Common myeloid progenitor, CD34-positive (primary cell): ENCODE measurements at regions of chr11 and their contacts with region 1.

Region 1: GRCh38 chr11:17063171-17064002 is 14.1 kb downstream of the RPS13 start:
- DNase-seq: peak; percentile 43 to 58 (median 50)
- H3K4me3 ChIP-seq: no peak overlapping the region
- H3K27ac ChIP-seq: no peak overlapping the region
- H3K4me1 ChIP-seq: no peaks in the 10 kb centered on the region
- H3K27me3 ChIP-seq: no peaks in the 10 kb centered on the region

Region 2: GRCh38 chr11:16935518-16936302 is 127.7 kb before region 1 on chr11:
- CTCF ChIA-PET with region 1: interaction called, 22 read pairs
- POLR2A ChIA-PET with region 1: no interaction called
- DNase-seq: peak; percentile 40 to 70 (median 64)
- H3K4me3 ChIP-seq: no peak overlapping the region
- H3K27ac ChIP-seq: no peak overlapping the region
- H3K4me1 ChIP-seq: no peaks in the 10 kb centered on the region
- H3K27me3 ChIP-seq: peaks cover 0 to 11% (median 0%) of the 10 kb centered on the region in 5 experiments

Region 3: GRCh38 chr11:16945671-16946469 is 117.5 kb before region 1 on chr11:
- CTCF ChIA-PET with region 1: interaction called, 22 read pairs
- POLR2A ChIA-PET with region 1: no interaction called
- DNase-seq: peak; percentile 54 to 68 (median 63)
- H3K4me3 ChIP-seq: no peak overlapping the region
- H3K27ac ChIP-seq: no peak overlapping the region
- H3K4me1 ChIP-seq: peaks cover 0 to 1% (median 0%) of the 10 kb centered on the region in 4 experiments
- H3K27me3 ChIP-seq: no peaks in the 10 kb centered on the region

Region 4: GRCh38 chr11:17019232-17019631 is 44.2 kb before region 1 on chr11:
- CTCF ChIA-PET with region 1: no interaction called
- POLR2A ChIA-PET with region 1: no interaction called
- DNase-seq: no peak
- H3K4me3 ChIP-seq: no peak overlapping the region
- H3K27ac ChIP-seq: no peak overlapping the region
- H3K4me1 ChIP-seq: peaks cover 0 to 4% (median 2%) of the 10 kb centered on the region in 4 experiments
- H3K27me3 ChIP-seq: peaks cover 0 to 10% (median 2%) of the 10 kb centered on the region in 5 experiments

Region 5: DNA sequence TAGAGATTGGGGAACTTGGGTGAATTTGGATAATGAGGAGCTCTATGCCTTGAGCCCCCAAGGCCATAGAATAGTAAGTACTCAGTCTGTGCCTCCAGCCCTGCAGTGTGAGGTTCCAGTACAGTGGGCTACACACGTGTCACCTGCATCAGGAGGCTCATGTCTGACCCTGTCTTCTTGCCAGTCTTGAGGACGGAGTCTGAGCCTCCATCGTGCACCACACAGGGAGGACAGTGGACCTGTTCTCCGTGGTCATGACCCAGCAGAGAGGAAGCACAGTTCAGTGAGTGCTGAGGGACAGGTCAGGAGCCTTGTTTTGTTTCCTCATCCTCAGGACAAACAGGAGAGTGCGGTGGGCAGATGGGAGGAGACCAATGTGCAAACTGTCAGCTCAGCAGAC is 16.7 kb before region 1 on chr11:
- CTCF ChIA-PET with region 1: interaction called, 11 read pairs
- POLR2A ChIA-PET with region 1: no interaction called
- DNase-seq: no peak
- H3K4me3 ChIP-seq: no peak overlapping the region
- H3K27ac ChIP-seq: no peak overlapping the region
- H3K4me1 ChIP-seq: no peaks in the 10 kb centered on the region
- H3K27me3 ChIP-seq: no peaks in the 10 kb centered on the region

Region 6: DNA sequence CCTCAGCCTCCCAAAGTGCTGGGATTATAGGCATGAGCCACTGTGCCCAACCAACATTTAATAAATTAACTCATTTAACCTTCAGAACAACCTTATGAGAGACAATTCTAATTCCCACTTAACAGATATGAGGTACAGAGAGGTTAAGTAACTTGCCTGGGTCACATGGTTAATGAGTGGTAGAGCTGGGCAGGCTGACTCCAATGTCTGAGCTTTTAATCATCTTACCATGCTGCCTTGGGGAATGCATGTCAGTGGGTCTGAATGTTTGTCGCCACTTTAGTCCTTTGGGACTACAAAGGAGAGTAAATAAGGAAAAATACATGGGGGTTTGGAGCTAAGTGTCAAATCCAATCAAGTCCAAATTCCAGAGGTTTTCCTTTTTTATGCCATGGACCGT is 155.6 kb after region 1 on chr11:
- CTCF ChIA-PET with region 1: no interaction called
- POLR2A ChIA-PET with region 1: no interaction called
- DNase-seq: no peak
- H3K4me3 ChIP-seq: no peak overlapping the region
- H3K27ac ChIP-seq: no peak overlapping the region
- H3K4me1 ChIP-seq: peaks cover 0 to 6% (median under 1%) of the 10 kb centered on the region in 4 experiments
- H3K27me3 ChIP-seq: no peaks in the 10 kb centered on the region